CD4-positive, alpha-beta T cell (primary cell): ENCODE measurements at regions of chr19 and their contacts with region 1.

Region 1: DNA sequence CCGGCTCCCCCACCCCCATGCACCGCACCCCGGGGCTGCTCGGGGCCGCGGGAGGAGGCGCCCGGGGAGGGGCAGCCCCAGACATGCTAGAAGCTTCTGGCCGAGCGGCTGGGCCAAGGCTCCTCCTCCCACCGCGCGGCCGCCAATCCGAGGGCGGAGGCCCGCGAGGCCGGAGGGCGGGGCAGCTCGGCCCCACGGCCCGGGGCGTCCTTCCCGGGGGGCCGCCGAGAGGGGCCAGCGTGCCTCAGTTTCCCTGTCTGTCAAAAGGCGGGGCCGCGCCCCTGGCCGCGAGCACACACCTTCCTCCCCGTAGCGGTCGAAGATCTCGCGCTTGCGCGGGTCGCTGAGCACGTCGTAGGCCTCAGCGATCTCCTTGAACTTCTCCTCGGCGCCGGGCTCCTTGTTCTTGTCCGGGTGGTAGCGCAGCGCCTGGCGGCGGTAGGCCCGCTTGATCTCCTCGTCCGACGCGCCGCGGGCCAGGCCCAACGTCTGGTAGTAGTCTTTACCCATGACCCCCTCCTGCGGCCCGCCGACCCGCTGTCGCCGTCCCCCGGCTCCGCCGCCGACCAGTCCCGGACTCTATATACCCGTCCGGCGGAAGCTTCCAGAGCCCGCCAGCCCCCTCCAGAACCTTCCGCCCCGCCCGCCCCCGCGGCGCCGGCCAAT is at the start of gene DNAJB1:
- DNase-seq: peak in 11 of 14 experiments; percentile 49 to 98 (median 67)
- ATAC-seq: peak; percentile 7
- H3K4me3 ChIP-seq: peak within 1 kb of the TSS; percentile 93
- H3K4me3 Mint-ChIP-seq: peak within 1 kb of the TSS; percentile 100
- H3K27ac ChIP-seq: peak within 1 kb of the TSS; percentile 91 to 97
- H3K27ac Mint-ChIP-seq: peak within 1 kb of the TSS; percentile 100
- H3K4me1 ChIP-seq: peaks cover 79% of the 10 kb centered on the region
- H3K4me1 Mint-ChIP-seq: peaks cover 82% of the 10 kb centered on the region
- H3K27me3 ChIP-seq: no peaks in the 10 kb centered on the region
- H3K27me3 Mint-ChIP-seq: no peaks in the 10 kb centered on the region
- CTCF ChIP-seq: no peak
- total RNA-seq, gene DNAJB1: 666 to 672 TPM

Region 2: DNA sequence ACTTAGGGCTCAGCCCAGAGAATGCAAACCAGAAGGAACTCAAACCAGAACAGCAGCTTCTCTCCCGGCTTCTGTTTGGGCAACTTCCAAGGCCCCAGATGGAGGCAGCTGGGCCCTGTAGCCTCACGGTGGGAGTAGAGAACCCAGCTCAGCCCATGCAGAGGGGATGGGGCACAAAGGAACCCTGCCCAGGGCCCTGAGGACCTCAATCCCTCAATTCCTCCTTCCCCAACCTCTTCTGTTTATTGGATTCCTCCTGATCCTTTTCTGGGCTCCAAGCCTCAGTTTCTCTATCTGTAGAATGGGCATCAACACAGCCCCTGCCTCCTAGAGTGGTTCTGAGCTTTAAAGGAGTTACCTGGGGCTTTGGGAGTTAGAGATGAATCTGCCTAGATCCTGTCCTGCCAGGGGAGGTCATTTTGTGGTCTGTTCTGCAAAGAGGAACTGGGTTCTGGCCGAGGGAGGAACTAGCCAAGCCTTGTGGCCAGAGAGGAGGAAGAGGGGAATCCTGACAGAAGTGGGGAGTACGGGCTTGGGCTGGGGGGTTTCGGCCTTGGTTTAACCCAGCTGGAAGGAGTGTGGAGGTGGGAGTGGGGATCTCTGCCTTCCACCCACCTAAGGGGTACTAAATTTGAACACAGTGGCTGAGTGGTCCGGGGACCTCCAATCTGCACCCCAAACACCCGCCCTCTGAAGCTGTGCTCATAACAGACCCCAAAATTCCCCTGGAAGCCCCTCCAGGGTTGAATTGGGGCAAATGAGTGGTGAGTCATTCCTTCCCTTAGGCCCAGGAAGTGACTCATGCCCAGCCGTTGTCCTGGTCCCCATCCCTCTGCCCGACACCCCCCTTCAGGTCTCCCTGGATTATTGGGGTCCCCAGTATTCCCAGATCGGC is 134.1 kb before region 1 on chr19:
- CTCF ChIA-PET with region 1: no interaction called
- POLR2A ChIA-PET with region 1: interaction called, 12 read pairs
- intact Hi-C with region 1: no loop called
- DNase-seq: peak in 5 of 14 experiments; percentile 46 to 84 (median 79)
- ATAC-seq: no peak
- H3K4me3 ChIP-seq: peak overlapping the region; percentile 92
- H3K4me3 Mint-ChIP-seq: peak overlapping the region; percentile 93
- H3K27ac ChIP-seq: peak overlapping the region; percentile 96 to 99
- H3K27ac Mint-ChIP-seq: peak overlapping the region; percentile 94
- H3K4me1 ChIP-seq: peaks cover 81% of the 10 kb centered on the region
- H3K4me1 Mint-ChIP-seq: peaks cover 52% of the 10 kb centered on the region
- H3K27me3 ChIP-seq: no peaks in the 10 kb centered on the region
- H3K27me3 Mint-ChIP-seq: no peaks in the 10 kb centered on the region
- CTCF ChIP-seq: no peak

Region 3: DNA sequence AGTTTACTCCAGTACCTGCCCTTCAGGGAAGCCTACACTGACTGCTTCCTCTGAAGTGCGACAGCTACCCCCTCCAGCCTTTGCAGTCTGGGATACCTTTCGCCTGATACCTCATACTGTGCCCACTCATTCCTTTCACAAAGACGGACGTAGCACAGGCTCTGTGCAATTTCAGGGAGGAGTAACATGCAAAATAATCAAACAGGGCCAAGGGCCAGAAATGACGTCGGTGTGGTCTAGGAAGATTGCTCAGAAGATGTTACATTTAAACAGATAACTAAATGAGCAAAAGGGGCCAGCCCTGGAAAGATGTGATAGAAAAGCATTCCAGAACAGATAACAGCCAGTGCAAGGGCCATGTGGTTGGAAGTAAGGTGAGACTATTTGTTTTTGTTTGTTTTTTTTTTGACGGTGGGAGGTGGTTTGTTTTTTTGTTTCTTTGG is 92.3 kb before region 1 on chr19:
- CTCF ChIA-PET with region 1: no interaction called
- POLR2A ChIA-PET with region 1: no interaction called
- intact Hi-C with region 1: no loop called
- DNase-seq: no peak
- ATAC-seq: no peak
- H3K4me3 ChIP-seq: no peak overlapping the region
- H3K4me3 Mint-ChIP-seq: no peak overlapping the region
- H3K27ac ChIP-seq: no peak overlapping the region
- H3K27ac Mint-ChIP-seq: no peak overlapping the region
- H3K4me1 ChIP-seq: no peaks in the 10 kb centered on the region
- H3K4me1 Mint-ChIP-seq: no peaks in the 10 kb centered on the region
- H3K27me3 ChIP-seq: no peaks in the 10 kb centered on the region
- H3K27me3 Mint-ChIP-seq: no peaks in the 10 kb centered on the region
- CTCF ChIP-seq: no peak

Region 4: GRCh38 chr19:14505488-14506432 is 12.2 kb before region 1 on chr19:
- CTCF ChIA-PET with region 1: interaction called, 29 read pairs
- POLR2A ChIA-PET with region 1: interaction called, 430 read pairs
- intact Hi-C with region 1: loop called (anchors 1 kb)
- DNase-seq: peak; percentile 63 to 85 (median 70)
- ATAC-seq: peak; percentile 42
- H3K4me3 ChIP-seq: no peak overlapping the region
- H3K4me3 Mint-ChIP-seq: peak overlapping the region; percentile 66
- H3K27ac ChIP-seq: peak overlapping the region; percentile 50 to 68
- H3K27ac Mint-ChIP-seq: peak overlapping the region; percentile 96
- H3K4me1 ChIP-seq: peaks cover 53% of the 10 kb centered on the region
- H3K4me1 Mint-ChIP-seq: peaks cover 70% of the 10 kb centered on the region
- H3K27me3 ChIP-seq: no peaks in the 10 kb centered on the region
- H3K27me3 Mint-ChIP-seq: no peaks in the 10 kb centered on the region
- CTCF ChIP-seq: peak; percentile 85

Region 5: DNA sequence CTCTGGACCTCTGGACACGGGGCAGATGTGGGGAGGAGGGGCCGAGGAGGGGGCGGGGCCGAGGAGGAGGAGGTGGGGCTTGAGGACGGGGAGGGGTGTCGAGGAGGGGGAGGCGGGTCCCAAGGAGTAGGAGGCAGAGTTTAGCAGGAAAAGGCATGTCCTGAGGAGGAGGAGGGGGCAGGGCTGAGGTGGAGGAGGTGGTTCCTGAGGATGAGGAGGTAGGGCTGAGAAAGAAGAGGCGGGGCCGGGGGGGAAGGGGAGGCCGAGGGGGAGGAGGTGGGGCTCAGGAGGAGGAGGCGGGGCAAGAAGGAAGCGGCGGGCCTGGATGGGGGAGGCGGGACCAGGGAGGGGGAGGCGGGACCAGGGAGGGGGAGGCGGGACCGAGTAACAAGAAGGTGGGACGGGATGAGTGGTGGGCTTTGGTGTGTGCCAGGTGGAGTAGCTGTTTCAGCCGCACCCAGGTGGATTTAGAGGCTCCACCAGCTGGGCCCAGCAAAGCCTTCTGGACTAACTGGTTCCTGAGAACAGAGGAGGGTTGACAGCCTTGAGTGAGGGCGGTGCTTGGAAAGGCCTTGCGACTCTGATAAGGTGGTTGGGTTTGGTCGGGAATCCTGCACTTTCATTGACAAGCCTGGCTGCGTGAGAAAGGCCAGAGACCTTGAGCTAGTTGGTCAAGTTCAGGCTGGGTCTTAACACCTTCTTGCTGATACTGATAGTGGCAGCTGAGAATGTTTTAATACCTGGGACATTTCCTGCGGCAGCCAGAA is 19.1 kb after region 1 on chr19:
- CTCF ChIA-PET with region 1: no interaction called
- POLR2A ChIA-PET with region 1: interaction called, 39 read pairs
- intact Hi-C with region 1: no loop called
- DNase-seq: peak in 8 of 14 experiments; percentile 31 to 70 (median 60)
- ATAC-seq: peak; percentile 73
- H3K4me3 ChIP-seq: no peak overlapping the region
- H3K4me3 Mint-ChIP-seq: no peak overlapping the region
- H3K27ac ChIP-seq: no peak overlapping the region
- H3K27ac Mint-ChIP-seq: no peak overlapping the region
- H3K4me1 ChIP-seq: peaks cover 49% of the 10 kb centered on the region
- H3K4me1 Mint-ChIP-seq: peaks cover 44% of the 10 kb centered on the region
- H3K27me3 ChIP-seq: no peaks in the 10 kb centered on the region
- H3K27me3 Mint-ChIP-seq: no peaks in the 10 kb centered on the region
- CTCF ChIP-seq: no peak

Region 6: DNA sequence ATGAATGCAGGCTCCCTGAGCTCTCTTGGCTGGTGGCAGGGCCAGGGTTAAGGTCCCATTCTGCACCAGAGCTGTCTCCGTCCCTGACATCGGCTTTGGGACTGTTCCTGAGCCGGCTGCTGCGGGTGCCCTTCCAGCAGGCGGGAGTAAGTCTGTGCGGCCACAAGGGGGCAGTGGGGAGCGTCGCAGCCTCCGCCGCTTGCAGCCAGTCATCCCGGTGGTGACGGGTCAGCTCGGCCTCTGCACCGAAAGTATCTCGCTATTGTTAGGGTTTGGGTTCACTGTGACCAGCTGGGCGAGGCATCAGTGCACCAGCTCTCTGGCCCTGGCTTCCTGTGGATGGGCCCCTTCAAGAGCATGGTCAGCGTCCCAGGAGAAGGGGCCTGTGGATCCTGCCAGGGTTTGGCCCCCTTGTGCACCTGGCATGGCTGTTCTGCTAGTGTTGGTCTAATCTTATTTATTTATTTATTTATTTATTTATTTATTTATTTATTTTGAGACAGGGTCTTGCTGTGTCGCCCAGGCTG is 38.8 kb after region 1 on chr19:
- CTCF ChIA-PET with region 1: interaction called, 10 read pairs
- POLR2A ChIA-PET with region 1: interaction called, 46 read pairs
- intact Hi-C with region 1: no loop called
- DNase-seq: peak; percentile 52 to 88 (median 66)
- ATAC-seq: peak; percentile 83
- H3K4me3 ChIP-seq: peak overlapping the region; percentile 28
- H3K4me3 Mint-ChIP-seq: peak overlapping the region; percentile 66
- H3K27ac ChIP-seq: no peak overlapping the region
- H3K27ac Mint-ChIP-seq: peak overlapping the region; percentile 81
- H3K4me1 ChIP-seq: peaks cover 78% of the 10 kb centered on the region
- H3K4me1 Mint-ChIP-seq: peaks cover 39% of the 10 kb centered on the region
- H3K27me3 ChIP-seq: no peaks in the 10 kb centered on the region
- H3K27me3 Mint-ChIP-seq: no peaks in the 10 kb centered on the region
- CTCF ChIP-seq: peak; percentile 96

Region 7: DNA sequence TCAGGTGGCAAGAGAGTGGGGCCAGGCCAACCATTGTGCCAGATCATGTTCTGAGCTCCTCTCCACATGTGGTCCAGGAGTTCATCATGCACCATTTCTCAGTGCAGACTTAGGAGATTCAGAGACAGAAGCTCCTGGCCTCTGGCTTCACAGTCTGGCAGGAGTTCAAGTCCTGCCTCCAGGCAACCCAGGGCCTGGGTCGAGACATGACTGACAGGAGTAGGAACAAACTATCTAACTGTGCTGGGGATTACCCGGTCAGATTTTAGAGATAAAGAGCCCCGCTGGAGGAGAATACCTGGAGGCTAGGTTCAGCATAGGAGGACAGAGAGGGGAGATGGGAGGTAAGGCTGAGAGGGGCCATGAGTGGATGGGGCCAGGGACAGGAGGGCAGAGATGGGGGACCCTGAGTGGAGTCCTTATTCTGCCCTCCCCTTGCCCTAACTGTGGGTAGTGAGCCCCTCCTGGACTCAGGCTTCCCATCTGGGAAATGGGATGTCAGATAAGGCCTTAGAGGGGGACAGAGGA is 1417.3 kb after region 1 on chr19:
- CTCF ChIA-PET with region 1: no interaction called
- POLR2A ChIA-PET with region 1: no interaction called
- intact Hi-C with region 1: no loop called
- DNase-seq: no peak
- ATAC-seq: no peak
- H3K4me3 ChIP-seq: no peak overlapping the region
- H3K4me3 Mint-ChIP-seq: no peak overlapping the region
- H3K27ac ChIP-seq: no peak overlapping the region
- H3K27ac Mint-ChIP-seq: no peak overlapping the region
- H3K4me1 ChIP-seq: no peaks in the 10 kb centered on the region
- H3K4me1 Mint-ChIP-seq: no peaks in the 10 kb centered on the region
- H3K27me3 ChIP-seq: peaks cover 29 to 35% of the 10 kb centered on the region in 2 experiments
- H3K27me3 Mint-ChIP-seq: peaks cover 8% of the 10 kb centered on the region
- CTCF ChIP-seq: no peak